A673 (cell line): ENCODE measurements at regions of chr18 and their contacts with region 1.

Region 1: GRCh38 chr18:23619388-23619881 is 33.1 kb upstream of the NPC1 start:
- DNase-seq: no peak
- H3K4me3 ChIP-seq: peak overlapping the region; percentile 42
- H3K27ac ChIP-seq: no peak overlapping the region
- H3K4me1 ChIP-seq: no peaks in the 10 kb centered on the region
- H3K27me3 ChIP-seq: peaks cover 17% of the 10 kb centered on the region
- CTCF ChIP-seq: no peak

Region 2: GRCh38 chr18:23272498-23273232 is 346.8 kb before region 1 on chr18:
- CTCF ChIA-PET with region 1: no interaction called
- POLR2A ChIA-PET with region 1: interaction called, 22 read pairs
- intact Hi-C with region 1: no loop called
- DNase-seq: no peak
- H3K4me3 ChIP-seq: no peak overlapping the region
- H3K27ac ChIP-seq: no peak overlapping the region
- H3K4me1 ChIP-seq: no peaks in the 10 kb centered on the region
- H3K27me3 ChIP-seq: no peaks in the 10 kb centered on the region
- CTCF ChIP-seq: no peak

Region 3: GRCh38 chr18:23812546-23813440 is 193.4 kb after region 1 on chr18:
- CTCF ChIA-PET with region 1: interaction called, 4 read pairs
- POLR2A ChIA-PET with region 1: no interaction called
- intact Hi-C with region 1: loop called (anchors 2 kb)
- DNase-seq: peak; percentile 66
- H3K4me3 ChIP-seq: no peak overlapping the region
- H3K27ac ChIP-seq: no peak overlapping the region
- H3K4me1 ChIP-seq: no peaks in the 10 kb centered on the region
- H3K27me3 ChIP-seq: no peaks in the 10 kb centered on the region
- CTCF ChIP-seq: peak; percentile 65